Gastrocnemius medialis (tissue), 4 donors: ENCODE measurements at regions of chrX and their contacts with region 1.

Region 1: DNA sequence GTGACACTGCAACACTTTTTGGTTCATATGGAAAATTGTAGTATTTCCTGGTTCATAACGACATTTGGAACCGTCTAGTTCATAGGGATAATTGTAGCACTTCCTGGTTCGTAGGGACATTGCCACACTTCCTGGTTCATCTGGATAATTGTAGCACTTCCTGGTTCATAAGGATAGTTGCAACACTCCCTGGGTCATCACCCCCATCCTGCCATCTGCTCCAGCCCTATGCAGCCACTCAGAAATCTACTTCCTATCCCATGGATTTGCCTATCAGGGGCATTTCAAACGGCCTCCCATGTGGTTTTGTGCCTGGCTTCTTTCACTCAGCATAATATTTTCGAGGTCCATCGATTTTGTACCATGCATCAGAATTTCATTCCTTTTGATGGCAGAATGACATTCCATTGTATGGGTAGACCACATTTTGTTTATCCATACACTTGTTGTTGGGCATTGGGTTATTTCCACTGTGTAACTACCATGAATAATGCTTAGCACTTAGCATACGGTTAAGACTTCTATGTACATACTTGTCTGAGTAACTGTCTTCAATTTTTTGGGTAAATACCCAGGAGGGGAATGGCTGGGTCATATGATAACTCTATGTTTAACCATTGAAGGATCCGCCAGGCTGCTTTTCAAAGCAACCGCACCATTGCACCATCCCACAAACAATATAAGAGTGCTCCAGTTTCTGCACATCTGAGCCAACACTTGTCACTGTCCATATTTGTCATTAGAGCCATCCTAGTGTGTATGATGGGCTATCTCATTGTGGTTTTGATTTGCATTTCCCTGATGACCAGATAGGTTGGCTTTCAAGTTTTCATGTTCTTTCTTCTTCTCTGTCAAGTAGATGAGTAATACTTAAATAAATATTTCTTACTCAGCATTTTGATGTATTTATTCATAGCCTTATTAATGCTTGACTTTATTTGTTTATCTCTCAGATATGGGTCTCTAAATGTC is 58.3 kb upstream of the CD99 start:
- DNase-seq: no peak
- ATAC-seq: no peak
- H3K4me3 ChIP-seq: no peak overlapping the region
- H3K27ac ChIP-seq: no peak overlapping the region
- H3K4me1 ChIP-seq: no peaks in the 10 kb centered on the region
- H3K27me3 ChIP-seq: no peaks in the 10 kb centered on the region
- CTCF ChIP-seq: no peak
- POLR2A ChIP-seq: no peak

Region 2: DNA sequence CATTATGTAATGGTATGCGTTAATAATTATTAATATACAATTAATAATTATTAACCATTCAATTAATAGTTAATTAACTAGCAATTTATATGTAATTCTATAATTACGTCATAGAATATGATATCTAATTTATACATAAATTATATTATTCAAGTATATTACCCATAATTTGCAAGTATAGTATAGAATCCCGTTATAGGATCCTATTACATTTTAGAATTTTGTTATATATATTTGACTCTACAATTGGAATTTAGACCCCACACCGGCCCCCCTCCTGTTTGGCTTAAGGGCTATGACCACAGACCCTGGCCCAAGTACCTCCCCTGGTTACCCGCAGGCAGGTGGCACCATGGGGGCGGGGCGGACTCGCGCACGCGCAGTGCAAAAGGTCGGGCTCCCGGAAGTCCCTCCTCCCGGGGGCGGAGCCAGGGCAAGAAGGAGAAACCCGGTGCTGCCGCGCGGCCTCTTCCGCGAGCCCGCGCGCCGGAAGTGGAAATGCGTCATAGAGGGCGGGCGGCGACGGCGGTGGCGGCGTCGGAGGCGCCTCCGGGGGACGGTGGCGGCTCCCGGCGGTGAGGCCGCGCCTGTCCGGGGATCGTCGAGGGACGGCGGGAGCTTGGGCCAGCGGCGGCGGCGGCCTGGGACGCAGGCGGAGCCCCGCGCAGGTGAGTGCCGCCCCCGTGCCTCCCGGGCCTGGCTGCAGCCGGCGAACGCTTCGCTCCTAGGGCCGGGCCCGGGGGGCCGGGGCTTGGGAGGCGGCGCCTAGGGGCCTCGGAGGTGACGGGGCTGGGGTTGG is 1041.5 kb before region 1 on chrX and contains the start of gene AKAP17A:
- in situ Hi-C with region 1: no loop called
- intact Hi-C with region 1: loop called (anchors 2 kb)
- DNase-seq: peak; percentile 91 to 95
- ATAC-seq: peak; percentile 95 to 99
- H3K4me3 ChIP-seq: peak within 1 kb of the TSS; percentile 77 to 99 (median 91)
- H3K27ac ChIP-seq: peak within 1 kb of the TSS; percentile 74 to 88 (median 80)
- H3K4me1 ChIP-seq: peaks cover 6 to 14% of the 10 kb centered on the region in 2 donors
- H3K27me3 ChIP-seq: no peaks in the 10 kb centered on the region
- CTCF ChIP-seq: peak in 1 of 5 experiments; percentile 21
- POLR2A ChIP-seq: peak; percentile 80 to 84
- total RNA-seq, gene AKAP17A: 14.1 to 15.9 (median 14.5) TPM

Region 3: DNA sequence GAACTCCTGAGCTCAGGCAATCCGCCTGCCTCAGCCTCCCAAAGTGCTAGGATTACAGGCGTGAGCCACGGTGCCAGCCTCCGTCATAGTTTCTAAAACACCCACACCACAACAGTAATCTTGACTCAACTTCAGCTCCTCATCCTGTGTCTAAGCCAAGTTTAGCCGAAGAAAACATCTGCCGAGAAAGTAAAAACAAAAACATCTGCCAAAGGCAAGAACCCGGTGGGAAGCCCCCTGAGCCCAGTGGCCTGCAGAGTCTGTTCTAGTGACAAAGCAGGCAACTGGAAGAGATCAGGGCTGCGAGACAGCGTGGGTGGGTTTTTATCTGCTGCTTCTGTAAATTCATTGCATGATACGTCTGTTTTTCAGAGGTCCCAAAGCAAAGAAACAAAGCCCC is 31.7 kb after region 1 on chrX:
- in situ Hi-C with region 1: no loop called
- intact Hi-C with region 1: no loop called
- DNase-seq: peak in 1 of 2 donors; percentile 25
- ATAC-seq: peak in 1 of 2 donors; percentile 51
- H3K4me3 ChIP-seq: no peak overlapping the region
- H3K27ac ChIP-seq: peak overlapping the region in 3 of 4 donors; percentile 18 to 41 (median 18)
- H3K4me1 ChIP-seq: no peaks in the 10 kb centered on the region
- H3K27me3 ChIP-seq: no peaks in the 10 kb centered on the region
- CTCF ChIP-seq: no peak
- POLR2A ChIP-seq: no peak

Region 4: DNA sequence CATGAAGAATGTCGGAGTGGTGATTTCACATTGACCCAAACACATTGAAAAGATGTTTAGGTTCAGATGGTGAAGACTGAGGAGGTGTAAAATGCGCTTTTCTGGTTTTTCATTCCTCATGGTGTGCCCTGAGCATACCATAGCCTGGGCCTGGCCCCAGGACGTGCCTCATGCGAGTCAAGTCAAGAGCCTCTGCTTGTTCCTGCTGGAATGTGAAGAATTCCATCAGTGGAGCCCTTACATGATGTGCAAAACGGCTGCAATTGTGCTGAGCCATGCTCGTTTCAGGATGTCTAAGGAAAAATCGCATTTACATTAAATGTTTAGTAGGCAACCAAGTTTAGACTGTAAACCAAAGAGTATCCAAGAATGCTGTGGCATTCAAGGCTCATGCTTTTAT is 230.8 kb after region 1 on chrX:
- in situ Hi-C with region 1: no loop called
- intact Hi-C with region 1: no loop called
- DNase-seq: no peak
- ATAC-seq: no peak
- H3K4me3 ChIP-seq: no peak overlapping the region
- H3K27ac ChIP-seq: no peak overlapping the region
- H3K4me1 ChIP-seq: no peaks in the 10 kb centered on the region
- H3K27me3 ChIP-seq: no peaks in the 10 kb centered on the region
- CTCF ChIP-seq: no peak
- POLR2A ChIP-seq: no peak

Region 5: GRCh38 chrX:2875798-2876399 is 243.1 kb after region 1 on chrX:
- in situ Hi-C with region 1: no loop called
- intact Hi-C with region 1: no loop called
- DNase-seq: no peak
- ATAC-seq: no peak
- H3K4me3 ChIP-seq: no peak overlapping the region
- H3K27ac ChIP-seq: no peak overlapping the region
- H3K4me1 ChIP-seq: no peaks in the 10 kb centered on the region
- H3K27me3 ChIP-seq: no peaks in the 10 kb centered on the region
- CTCF ChIP-seq: no peak
- POLR2A ChIP-seq: no peak